MCF 10A (cell line): ENCODE measurements at regions of chr15 and their contacts with region 1.

Region 1: DNA sequence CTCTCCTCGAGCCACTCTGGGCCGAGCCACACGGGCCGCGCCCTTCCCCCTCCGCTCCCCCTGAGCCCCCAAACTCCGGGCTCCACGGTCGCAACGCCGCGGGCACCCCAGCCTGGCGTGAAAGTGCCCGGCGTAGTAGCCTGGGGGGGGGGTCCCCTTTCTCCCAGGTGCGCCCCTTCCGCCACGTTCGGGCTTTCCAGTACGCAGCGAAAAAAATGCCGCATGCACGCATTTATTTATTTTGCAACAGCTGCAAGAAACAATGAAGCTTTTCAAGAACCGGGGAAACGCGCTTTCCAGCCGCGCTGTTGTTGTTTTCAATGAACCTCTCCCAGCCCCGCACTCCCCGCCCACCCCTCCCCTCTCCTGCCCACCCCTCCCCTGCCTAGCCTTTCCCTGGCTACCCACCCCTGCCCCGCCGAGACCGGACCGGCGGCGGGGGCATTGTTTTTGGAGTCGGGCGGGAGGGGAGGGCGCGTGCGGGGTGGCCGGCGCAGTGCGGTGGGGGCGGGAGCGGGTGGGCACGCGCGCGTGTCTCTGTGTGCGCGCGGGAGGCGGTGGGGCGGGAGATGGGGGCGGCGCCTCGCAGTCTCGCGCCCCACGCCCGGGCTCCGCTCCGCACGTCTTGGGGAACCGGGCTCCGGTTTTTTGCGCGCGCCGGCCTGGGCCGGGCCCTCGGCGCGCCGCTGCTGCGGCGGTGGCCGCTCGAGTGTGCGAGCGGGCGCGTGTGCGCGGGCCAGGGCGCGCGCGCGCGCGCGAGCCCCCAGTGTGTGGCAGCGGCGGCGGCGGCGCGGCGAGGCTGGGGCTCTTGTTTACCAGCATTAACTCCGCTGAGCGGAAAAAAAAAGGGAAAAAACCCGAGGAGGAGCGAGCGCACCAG is at the start of gene IGF1R:
- DNase-seq: peak; percentile 83
- H3K4me3 Mint-ChIP-seq: peak within 1 kb of the TSS; percentile 89
- H3K27ac Mint-ChIP-seq: peak within 1 kb of the TSS; percentile 83
- H3K4me1 Mint-ChIP-seq: peaks cover 14% of the 10 kb centered on the region
- H3K27me3 Mint-ChIP-seq: peaks cover 43% of the 10 kb centered on the region
- CTCF ChIP-seq: no peak
- total RNA-seq, gene IGF1R: 50.7 and 53.3 TPM in 2 replicates

Region 2: DNA sequence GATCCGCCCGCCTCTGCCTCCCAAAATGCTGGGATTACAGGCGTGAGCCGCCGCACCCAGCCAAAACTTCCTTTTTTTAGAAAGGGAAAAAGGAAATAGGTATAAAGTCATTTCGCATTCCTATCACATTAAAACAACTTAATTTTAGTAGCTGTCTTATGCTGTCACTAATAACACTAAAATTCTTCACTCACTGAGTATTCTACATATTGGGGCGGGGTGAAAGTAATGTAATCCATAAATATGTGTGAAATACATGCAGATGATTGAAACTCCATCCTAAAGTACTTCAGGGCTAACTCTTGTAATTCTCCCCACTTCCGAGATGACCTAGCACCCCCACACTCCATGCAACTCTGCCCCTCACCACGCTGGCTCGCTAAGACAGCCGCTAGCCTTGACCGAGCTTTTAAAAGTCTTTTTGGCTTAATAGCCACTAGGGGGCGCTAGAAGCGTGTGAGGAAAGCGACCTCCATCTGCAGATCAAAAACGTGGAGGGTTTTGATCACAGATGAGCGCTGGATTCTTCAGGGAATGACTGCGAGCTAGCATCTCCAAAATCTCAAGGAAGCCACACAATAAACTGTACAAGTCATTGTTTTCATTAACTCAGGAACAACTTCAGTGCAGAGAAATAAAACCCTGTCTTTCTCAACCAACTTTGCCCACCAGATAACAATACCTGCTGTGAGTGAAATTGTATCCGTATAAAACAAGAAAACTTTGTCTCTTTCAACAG is 129.0 kb before region 1 on chr15:
- CTCF ChIA-PET with region 1: interaction called, 28 read pairs
- POLR2A ChIA-PET with region 1: interaction called, 26 read pairs
- intact Hi-C with region 1: loop called (anchors 1 kb)
- DNase-seq: peak; percentile 80
- H3K4me3 Mint-ChIP-seq: no peak overlapping the region
- H3K27ac Mint-ChIP-seq: no peak overlapping the region
- H3K4me1 Mint-ChIP-seq: peaks cover 4% of the 10 kb centered on the region
- H3K27me3 Mint-ChIP-seq: no peaks in the 10 kb centered on the region
- CTCF ChIP-seq: peak; percentile 53

Region 3: DNA sequence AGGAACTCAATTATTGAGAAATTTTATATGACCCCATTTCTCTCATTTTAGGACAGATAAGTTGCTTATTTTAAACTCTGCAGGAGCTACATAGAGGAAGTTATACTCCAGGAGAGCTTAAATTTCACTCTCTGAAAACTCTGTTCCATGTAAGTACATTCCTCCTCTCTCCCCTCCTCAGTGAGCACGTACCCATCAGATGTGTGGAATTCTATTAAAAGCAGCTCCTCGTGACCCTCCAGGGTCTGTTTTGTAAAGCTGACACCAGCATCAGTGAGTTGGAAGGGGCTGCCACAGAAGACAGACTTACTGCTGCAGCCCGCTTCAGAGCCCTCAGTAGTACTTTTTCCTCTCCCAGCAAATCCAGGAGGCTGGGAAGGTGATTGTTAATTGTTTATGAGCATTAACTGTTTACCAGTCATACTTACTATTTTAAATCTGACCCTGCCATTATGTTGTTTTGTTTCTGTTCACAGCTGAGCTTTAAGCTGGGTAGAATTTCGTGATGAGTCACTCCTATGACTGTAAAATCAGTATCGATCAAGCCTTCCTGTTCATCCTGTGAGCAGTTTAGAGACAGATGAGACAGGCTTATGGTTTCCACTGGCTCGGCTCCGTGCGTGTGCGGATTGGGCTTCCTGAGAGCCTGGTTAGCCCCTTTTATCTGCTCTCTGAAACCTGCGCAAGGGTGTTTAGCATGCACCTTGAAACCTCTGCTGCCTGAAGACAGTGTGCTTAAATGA is 20.7 kb after region 1 on chr15:
- CTCF ChIA-PET with region 1: interaction called, 5 read pairs
- POLR2A ChIA-PET with region 1: interaction called, 33 read pairs
- intact Hi-C with region 1: no loop called
- DNase-seq: peak; percentile 76
- H3K4me3 Mint-ChIP-seq: peak overlapping the region; percentile 17
- H3K27ac Mint-ChIP-seq: peak overlapping the region; percentile 60
- H3K4me1 Mint-ChIP-seq: peaks cover 47% of the 10 kb centered on the region
- H3K27me3 Mint-ChIP-seq: no peaks in the 10 kb centered on the region
- CTCF ChIP-seq: no peak

Region 4: GRCh38 chr15:98753726-98754671 is 106.0 kb after region 1 on chr15:
- CTCF ChIA-PET with region 1: interaction called, 3 read pairs
- POLR2A ChIA-PET with region 1: interaction called, 13 read pairs
- intact Hi-C with region 1: loop called (anchors 2 kb)
- DNase-seq: peak; percentile 36
- H3K4me3 Mint-ChIP-seq: peak overlapping the region; percentile 79
- H3K27ac Mint-ChIP-seq: peak overlapping the region; percentile 91
- H3K4me1 Mint-ChIP-seq: no peaks in the 10 kb centered on the region
- H3K27me3 Mint-ChIP-seq: no peaks in the 10 kb centered on the region
- CTCF ChIP-seq: no peak

Region 5: DNA sequence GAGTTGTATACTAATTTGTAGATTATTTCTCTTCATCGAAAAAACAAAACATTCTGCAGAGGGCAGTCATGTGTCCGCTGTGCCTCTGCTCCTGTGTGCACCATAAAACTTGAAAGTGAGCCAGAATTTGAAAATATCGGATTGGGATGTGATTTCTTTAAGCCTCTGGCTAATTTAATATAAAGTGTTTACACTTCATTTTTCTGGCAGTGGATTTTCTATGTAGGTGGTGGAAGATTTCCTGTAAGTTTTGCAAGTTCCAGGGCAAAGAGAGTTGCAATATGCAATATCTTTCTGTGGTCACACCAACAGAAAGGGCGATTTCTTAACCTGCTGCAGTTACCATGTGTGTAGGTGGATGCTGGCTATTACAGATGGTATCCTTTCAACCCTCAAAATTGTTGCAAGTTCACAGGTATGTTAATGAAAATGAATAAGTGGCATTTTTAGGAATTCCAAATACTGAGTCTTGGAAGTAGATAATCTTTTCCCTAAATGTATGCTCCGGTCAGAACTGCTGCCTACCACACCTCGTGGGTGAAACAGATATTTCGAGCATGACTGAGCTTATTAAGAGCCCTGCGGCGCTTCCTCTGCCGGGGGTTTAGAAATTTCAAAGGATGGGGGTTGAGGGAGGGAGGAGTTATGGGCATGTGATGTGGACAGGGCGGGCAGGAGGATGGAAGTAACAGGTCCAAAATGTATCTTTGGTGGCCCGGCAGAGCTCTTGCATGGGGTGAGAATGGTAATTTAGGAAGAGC is 225.6 kb after region 1 on chr15:
- CTCF ChIA-PET with region 1: interaction called, 4 read pairs
- POLR2A ChIA-PET with region 1: interaction called, 148 read pairs
- intact Hi-C with region 1: loop called (anchors 2 kb)
- DNase-seq: peak; percentile 97
- H3K4me3 Mint-ChIP-seq: peak overlapping the region; percentile 69
- H3K27ac Mint-ChIP-seq: peak overlapping the region; percentile 80
- H3K4me1 Mint-ChIP-seq: peaks cover 47% of the 10 kb centered on the region
- H3K27me3 Mint-ChIP-seq: no peaks in the 10 kb centered on the region
- CTCF ChIP-seq: no peak

Region 6: GRCh38 chr15:98904544-98904943 is 256.5 kb after region 1 on chr15:
- CTCF ChIA-PET with region 1: interaction called, 4 read pairs
- POLR2A ChIA-PET with region 1: interaction called, 62 read pairs
- intact Hi-C with region 1: loop called (anchors 1 kb)
- DNase-seq: peak; percentile 70
- H3K4me3 Mint-ChIP-seq: no peak overlapping the region
- H3K27ac Mint-ChIP-seq: peak overlapping the region; percentile 51
- H3K4me1 Mint-ChIP-seq: peaks cover 37% of the 10 kb centered on the region
- H3K27me3 Mint-ChIP-seq: no peaks in the 10 kb centered on the region
- CTCF ChIP-seq: peak; percentile 52

Region 7: DNA sequence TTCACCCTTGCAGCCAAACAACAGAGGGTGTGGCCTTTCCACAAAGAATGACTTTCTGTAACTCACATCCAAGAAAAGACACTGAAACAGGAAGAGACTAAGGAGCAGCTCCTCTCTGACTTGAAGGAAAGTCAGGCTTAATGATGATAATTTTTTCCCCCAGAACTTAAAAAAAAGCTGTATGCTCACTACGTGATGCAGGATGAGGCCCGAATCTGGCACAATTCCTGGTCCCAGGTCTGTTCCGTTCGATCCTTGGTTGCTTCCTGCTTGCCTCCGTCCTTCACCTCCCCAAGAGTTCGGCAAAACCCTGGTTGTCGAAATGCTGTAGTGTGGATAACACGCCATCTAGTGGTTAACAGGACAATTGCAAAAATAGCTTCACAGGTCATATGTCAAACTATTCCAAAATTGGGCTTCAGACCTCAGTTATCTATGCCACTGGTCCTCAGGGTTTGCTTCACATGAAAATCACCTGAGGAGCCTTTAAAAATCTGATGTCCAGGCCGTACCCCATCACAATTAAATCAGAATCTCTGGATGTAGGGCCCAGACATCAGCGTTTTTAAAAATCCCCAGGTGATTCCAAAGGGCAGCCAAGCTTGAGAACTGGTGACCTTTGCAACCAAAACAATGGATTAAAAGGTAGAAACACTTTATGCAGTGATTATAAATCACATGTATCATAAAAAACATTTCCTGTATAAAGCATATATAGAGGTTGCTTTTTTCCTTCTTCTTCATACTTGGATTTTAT is 428.7 kb after region 1 on chr15:
- CTCF ChIA-PET with region 1: interaction called, 7 read pairs
- POLR2A ChIA-PET with region 1: interaction called, 4 read pairs
- intact Hi-C with region 1: loop called (anchors 2 kb)
- DNase-seq: peak; percentile 84
- H3K4me3 Mint-ChIP-seq: peak overlapping the region; percentile 60
- H3K27ac Mint-ChIP-seq: no peak overlapping the region
- H3K4me1 Mint-ChIP-seq: peaks cover 6% of the 10 kb centered on the region
- H3K27me3 Mint-ChIP-seq: peaks cover 13% of the 10 kb centered on the region
- CTCF ChIP-seq: peak; percentile 66